Heart right ventricle (tissue), 16 donors: ENCODE measurements at regions of chr13 and their contacts with region 1.

Region 1: GRCh38 chr13:50081679-50082425 is 66.6 kb downstream of the KCNRG start:
- DNase-seq: peak; percentile 96 to 98
- ATAC-seq: peak; percentile 95 to 98 (median 97)
- H3K4me3 ChIP-seq: peak overlapping the region; percentile 42 to 82 (median 70)
- H3K27ac ChIP-seq: peak overlapping the region; percentile 30 to 91 (median 77)
- H3K4me1 ChIP-seq: peaks cover 0 to 82% (median 30%) of the 10 kb centered on the region in 9 donors
- H3K27me3 ChIP-seq: peaks cover 0 to 5% (median 0%) of the 10 kb centered on the region in 7 donors
- CTCF ChIP-seq: peak in 3 of 9 donors; percentile 18 to 30 (median 23)

Region 2: GRCh38 chr13:50006426-50007135 is 75.3 kb before region 1 on chr13:
- intact Hi-C with region 1: loop called in 1 of 10 experiments (anchors 5 kb)
- DNase-seq: no peak
- ATAC-seq: no peak
- H3K4me3 ChIP-seq: no peak overlapping the region
- H3K27ac ChIP-seq: peak overlapping the region in 2 of 10 donors; percentile 1 to 27
- H3K4me1 ChIP-seq: peaks cover 0 to 32% (median 21%) of the 10 kb centered on the region in 9 donors
- H3K27me3 ChIP-seq: no peaks in the 10 kb centered on the region
- CTCF ChIP-seq: no peak

Region 3: GRCh38 chr13:50198508-50198907 is 116.7 kb after region 1 on chr13:
- intact Hi-C with region 1: no loop called
- DNase-seq: no peak
- ATAC-seq: peak in 1 of 8 donors; percentile 58
- H3K4me3 ChIP-seq: no peak overlapping the region
- H3K27ac ChIP-seq: no peak overlapping the region
- H3K4me1 ChIP-seq: peaks cover 2 to 29% (median 14%) of the 10 kb centered on the region in 9 donors
- H3K27me3 ChIP-seq: no peaks in the 10 kb centered on the region
- CTCF ChIP-seq: no peak

Region 4: DNA sequence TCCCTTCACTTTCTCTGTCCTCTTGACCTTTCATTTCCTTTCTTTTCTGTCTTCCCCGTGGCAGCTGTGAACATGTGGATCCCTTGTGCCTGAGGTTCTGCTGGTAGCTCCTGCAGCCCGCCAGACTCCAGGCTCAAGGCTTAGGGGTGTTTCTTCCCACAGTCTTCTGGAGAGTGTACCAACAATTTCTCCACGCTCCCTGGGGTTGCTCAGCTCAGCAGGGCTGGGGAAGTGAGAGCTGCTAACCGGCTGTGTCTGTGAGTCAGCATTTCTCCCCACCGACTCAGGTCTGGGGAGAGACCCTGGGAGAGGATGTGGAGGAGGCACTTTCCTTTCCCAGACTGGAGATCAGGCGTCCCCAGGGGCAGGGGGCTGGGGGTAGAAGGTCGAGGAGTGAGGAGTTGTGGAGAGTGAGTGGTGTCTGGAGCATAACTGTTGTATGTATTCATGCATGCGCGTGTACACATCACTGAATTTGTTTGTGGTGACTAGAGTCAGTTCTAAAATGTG is 127.0 kb after region 1 on chr13:
- intact Hi-C with region 1: loop called in 1 of 10 experiments (anchors 5 kb)
- DNase-seq: peak; percentile 41 to 54
- ATAC-seq: peak; percentile 90 to 94 (median 92)
- H3K4me3 ChIP-seq: peak overlapping the region in 7 of 10 donors; percentile 2 to 38 (median 36)
- H3K27ac ChIP-seq: peak overlapping the region in 7 of 10 donors; percentile 36 to 80 (median 60)
- H3K4me1 ChIP-seq: peaks cover 0 to 19% (median 14%) of the 10 kb centered on the region in 9 donors
- H3K27me3 ChIP-seq: no peaks in the 10 kb centered on the region
- CTCF ChIP-seq: no peak

Region 5: GRCh38 chr13:50244713-50245574 is 163.1 kb after region 1 on chr13:
- intact Hi-C with region 1: no loop called
- DNase-seq: no peak
- ATAC-seq: peak in 3 of 8 donors; percentile 45 to 58 (median 47)
- H3K4me3 ChIP-seq: no peak overlapping the region
- H3K27ac ChIP-seq: no peak overlapping the region
- H3K4me1 ChIP-seq: peaks cover 0 to 24% (median 3%) of the 10 kb centered on the region in 9 donors
- H3K27me3 ChIP-seq: no peaks in the 10 kb centered on the region
- CTCF ChIP-seq: no peak

Region 6: GRCh38 chr13:50685491-50685890 is 603.6 kb after region 1 on chr13:
- intact Hi-C with region 1: loop called in 1 of 10 experiments (anchors 10 kb)
- DNase-seq: peak; percentile 81 to 90
- ATAC-seq: peak; percentile 72 to 92 (median 80)
- H3K4me3 ChIP-seq: no peak overlapping the region
- H3K27ac ChIP-seq: peak overlapping the region; percentile 2 to 89 (median 74)
- H3K4me1 ChIP-seq: peaks cover 0 to 49% (median 33%) of the 10 kb centered on the region in 9 donors
- H3K27me3 ChIP-seq: no peaks in the 10 kb centered on the region
- CTCF ChIP-seq: no peak